ENCODE measurements at regions of chr1 and their contacts with region 1.

Region 1: GRCh38 chr1:156797212-156797871 is 19.3 kb downstream of the SH2D2A start:
- DNase-seq: peak in 34 of 35 experiments; percentile 15 to 84 (median 58)
- ATAC-seq: peak; percentile 71 to 85 (median 82)
- H3K4me3 ChIP-seq: no peak overlapping the region
- H3K4me3 Mint-ChIP-seq: no peak overlapping the region
- H3K27ac ChIP-seq: no peak overlapping the region
- H3K27ac Mint-ChIP-seq: no peak overlapping the region
- H3K4me1 ChIP-seq: peaks cover 0 to 10% of the 10 kb centered on the region in 2 experiments
- H3K4me1 Mint-ChIP-seq: peaks cover 14 to 20% (median 15%) of the 10 kb centered on the region in 3 donors
- H3K27me3 ChIP-seq: no peaks in the 10 kb centered on the region
- H3K27me3 Mint-ChIP-seq: no peaks in the 10 kb centered on the region

Region 2: DNA sequence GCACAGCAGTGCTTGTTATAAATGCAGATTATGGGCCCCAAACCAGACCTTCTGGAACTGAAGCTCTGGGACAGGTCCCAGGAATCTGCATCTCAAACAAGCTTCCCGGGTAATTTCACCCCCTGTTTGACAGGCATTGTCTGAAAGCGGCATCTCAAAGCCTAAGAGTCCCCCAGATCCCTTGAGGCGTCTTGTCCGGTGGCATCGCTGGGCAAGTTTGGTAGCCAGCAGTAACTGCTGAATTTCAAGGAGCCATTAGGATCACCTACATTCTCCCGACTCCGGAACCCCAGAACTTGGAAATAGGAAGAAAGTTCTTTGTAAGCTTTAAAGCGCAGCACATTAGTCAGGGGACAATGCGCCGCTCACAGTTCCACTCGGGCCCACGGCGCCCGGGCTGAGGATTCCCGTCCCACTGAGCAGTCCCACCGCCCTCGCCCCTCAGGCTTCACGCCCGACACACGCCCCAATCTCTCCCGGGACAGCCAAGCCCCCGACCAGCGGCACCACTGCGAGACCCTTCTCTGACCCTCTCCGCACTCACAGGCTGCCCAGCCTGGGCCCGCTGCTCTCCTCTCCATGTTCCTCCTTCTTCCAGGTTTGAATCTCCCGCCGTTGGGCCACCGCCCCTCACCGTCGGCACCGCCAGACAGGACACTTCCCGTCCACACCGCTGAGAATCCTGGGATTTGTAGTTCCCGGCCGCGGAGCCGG is 225.2 kb before region 1 on chr1 and contains the start of gene IQGAP3:
- CTCF ChIA-PET with region 1: no interaction called
- POLR2A ChIA-PET with region 1: no interaction called
- DNase-seq: peak; percentile 40 to 79 (median 64)
- ATAC-seq: peak; percentile 83 to 99 (median 93)
- H3K4me3 ChIP-seq: peak within 1 kb of the TSS; percentile 8 to 64
- H3K4me3 Mint-ChIP-seq: peak within 1 kb of the TSS; percentile 75 to 91 (median 79)
- H3K27ac ChIP-seq: no peak within 1 kb of the TSS
- H3K27ac Mint-ChIP-seq: peak within 1 kb of the TSS in 1 of 2 donors; percentile 69
- H3K4me1 ChIP-seq: peaks cover 4 to 11% of the 10 kb centered on the region in 2 experiments
- H3K4me1 Mint-ChIP-seq: peaks cover 13 to 20% (median 16%) of the 10 kb centered on the region in 3 donors
- H3K27me3 ChIP-seq: peaks cover 0 to 29% of the 10 kb centered on the region in 2 experiments
- H3K27me3 Mint-ChIP-seq: peaks cover 34 to 38% of the 10 kb centered on the region in 2 donors
- total RNA-seq, gene IQGAP3: 0.13 to 0.19 (median 0.18) TPM in 4 of 5 donors, not detected in the other

Region 3: DNA sequence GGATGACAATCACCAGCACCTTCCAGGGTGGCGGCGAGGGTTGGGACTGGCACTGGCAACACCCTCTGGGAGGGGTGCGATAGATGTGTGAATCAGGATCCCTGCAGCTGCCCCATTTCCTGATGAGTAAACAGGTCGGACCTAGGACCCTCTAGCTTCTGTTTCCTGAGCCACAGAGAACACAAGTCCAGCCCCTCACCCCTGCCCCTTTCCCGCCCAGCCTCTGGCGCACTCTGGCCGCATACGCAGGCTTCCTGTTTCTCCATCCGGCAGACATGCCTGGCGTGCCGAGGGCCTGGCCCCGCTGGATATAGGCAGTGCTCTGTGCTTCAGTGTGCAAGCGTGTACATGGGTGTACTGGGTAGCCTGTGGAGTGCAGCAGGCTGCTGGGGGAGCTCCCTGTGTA is 100.8 kb after region 1 on chr1:
- CTCF ChIA-PET with region 1: interaction called, 3 to 11 read pairs
- POLR2A ChIA-PET with region 1: no interaction called
- DNase-seq: no peak
- ATAC-seq: peak; percentile 13 to 46 (median 40)
- H3K4me3 ChIP-seq: no peak overlapping the region
- H3K4me3 Mint-ChIP-seq: no peak overlapping the region
- H3K27ac ChIP-seq: no peak overlapping the region
- H3K27ac Mint-ChIP-seq: no peak overlapping the region
- H3K4me1 ChIP-seq: peaks cover 2 to 16% of the 10 kb centered on the region in 2 experiments
- H3K4me1 Mint-ChIP-seq: peaks cover 7 to 10% (median 8%) of the 10 kb centered on the region in 3 donors
- H3K27me3 ChIP-seq: peaks cover 0 to 88% of the 10 kb centered on the region in 2 experiments
- H3K27me3 Mint-ChIP-seq: peaks cover 10 to 51% of the 10 kb centered on the region in 2 donors

Measured in T-cell (primary cell).